Naive thymus-derived CD4-positive, alpha-beta T cell (primary cell): ENCODE measurements at regions of chr2 and their contacts with region 1.

Region 1: DNA sequence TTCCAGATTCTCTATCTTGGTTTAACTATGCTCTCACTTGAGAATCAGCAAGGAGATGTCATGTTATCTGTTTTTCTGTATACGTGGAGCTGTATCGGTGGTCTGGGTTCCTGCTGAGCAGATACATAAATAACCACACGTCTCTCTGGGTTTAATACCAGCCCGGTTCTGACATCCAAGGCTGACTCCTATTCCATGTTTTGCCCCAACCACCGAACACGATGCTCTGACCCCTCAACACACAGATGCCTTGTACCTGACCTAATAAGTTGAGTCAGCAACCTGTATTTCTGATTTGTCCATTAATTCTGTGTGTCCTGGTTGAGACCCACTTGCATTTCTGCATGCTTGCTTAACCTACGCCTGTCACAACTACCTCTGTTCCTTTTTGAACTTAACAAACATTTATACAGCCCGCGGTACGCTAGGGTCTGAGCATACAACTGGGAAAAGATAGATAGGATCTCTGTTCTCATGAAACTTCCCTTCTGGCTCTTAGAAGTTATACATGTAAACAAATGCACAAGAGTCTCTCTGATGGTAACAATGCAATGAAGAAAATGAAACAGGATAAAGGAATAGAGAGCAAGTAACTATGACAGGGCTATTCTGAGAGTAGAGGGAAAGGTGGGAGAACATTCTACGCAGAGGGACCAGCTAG is 480.4 kb downstream of the PARD3B start:
- DNase-seq: no peak
- ATAC-seq: no peak
- H3K4me3 ChIP-seq: no peak overlapping the region
- H3K4me3 Mint-ChIP-seq: peak overlapping the region in 8 of 10 donors; percentile 0 to 69 (median 34)
- H3K27ac ChIP-seq: no peak overlapping the region
- H3K27ac Mint-ChIP-seq: peak overlapping the region in 6 of 9 donors; percentile 1 to 76 (median 9)
- H3K4me1 ChIP-seq: peaks cover 0 to 8% of the 10 kb centered on the region in 2 donors
- H3K4me1 Mint-ChIP-seq: peaks cover 9 to 51% (median 36%) of the 10 kb centered on the region in 7 donors
- H3K27me3 ChIP-seq: no peaks in the 10 kb centered on the region
- H3K27me3 Mint-ChIP-seq: no peaks in the 10 kb centered on the region

Region 2: GRCh38 chr2:205041472-205042130 is 15.9 kb after region 1 on chr2:
- CTCF ChIA-PET with region 1: no interaction called
- POLR2A ChIA-PET with region 1: no interaction called
- intact Hi-C with region 1: loop called in 1 of 2 experiments (anchors 2 kb)
- DNase-seq: no peak
- ATAC-seq: no peak
- H3K4me3 ChIP-seq: no peak overlapping the region
- H3K4me3 Mint-ChIP-seq: no peak overlapping the region
- H3K27ac ChIP-seq: no peak overlapping the region
- H3K27ac Mint-ChIP-seq: peak overlapping the region in 5 of 9 donors; percentile 5 to 60 (median 24)
- H3K4me1 ChIP-seq: no peaks in the 10 kb centered on the region
- H3K4me1 Mint-ChIP-seq: peaks cover 0 to 33% (median 14%) of the 10 kb centered on the region in 7 donors
- H3K27me3 ChIP-seq: no peaks in the 10 kb centered on the region
- H3K27me3 Mint-ChIP-seq: peaks cover 0 to 18% (median 0%) of the 10 kb centered on the region in 5 donors